ENCODE measurements at regions of chr3 and their contacts with region 1.

Region 1: GRCh38 chr3:116896116-116896515 is 186.5 kb downstream of the TUSC7 start:
- DNase-seq: no peak
- ATAC-seq: no peak
- H3K4me3 ChIP-seq: no peak overlapping the region
- H3K4me3 Mint-ChIP-seq: no peak overlapping the region
- H3K27ac ChIP-seq: no peak overlapping the region
- H3K27ac Mint-ChIP-seq: no peak overlapping the region
- H3K4me1 ChIP-seq: no peaks in the 10 kb centered on the region
- H3K4me1 Mint-ChIP-seq: no peaks in the 10 kb centered on the region
- H3K27me3 ChIP-seq: no peaks in the 10 kb centered on the region
- H3K27me3 Mint-ChIP-seq: no peaks in the 10 kb centered on the region

Region 2: GRCh38 chr3:116872688-116873087 is 23.4 kb before region 1 on chr3:
- CTCF ChIA-PET with region 1: no interaction called
- POLR2A ChIA-PET with region 1: no interaction called
- DNase-seq: no peak
- ATAC-seq: no peak
- H3K4me3 ChIP-seq: no peak overlapping the region
- H3K4me3 Mint-ChIP-seq: no peak overlapping the region
- H3K27ac ChIP-seq: no peak overlapping the region
- H3K27ac Mint-ChIP-seq: no peak overlapping the region
- H3K4me1 ChIP-seq: no peaks in the 10 kb centered on the region
- H3K4me1 Mint-ChIP-seq: no peaks in the 10 kb centered on the region
- H3K27me3 ChIP-seq: no peaks in the 10 kb centered on the region
- H3K27me3 Mint-ChIP-seq: no peaks in the 10 kb centered on the region

Region 3: DNA sequence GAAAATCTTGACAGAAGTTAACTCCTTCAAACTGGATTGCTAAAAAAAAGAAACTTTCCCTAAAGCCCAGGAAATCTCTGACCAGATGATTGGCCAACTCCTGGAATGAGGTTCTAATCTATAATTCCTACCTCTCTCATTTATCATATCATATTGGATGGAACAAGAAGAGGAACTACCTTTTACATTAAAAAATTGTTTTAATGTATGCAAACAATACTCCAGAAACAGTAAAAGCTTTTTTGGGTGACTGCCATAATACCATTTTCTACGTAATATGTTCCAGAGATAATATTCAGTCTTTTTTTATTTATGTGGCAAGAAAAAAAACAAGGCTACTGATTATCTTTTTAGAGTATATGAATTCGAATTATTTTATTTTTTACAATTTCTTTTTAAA is 17.9 kb after region 1 on chr3:
- CTCF ChIA-PET with region 1: interaction called in 1 of 2 experiments, 15 read pairs
- POLR2A ChIA-PET with region 1: no interaction called
- DNase-seq: no peak
- ATAC-seq: no peak
- H3K4me3 ChIP-seq: no peak overlapping the region
- H3K4me3 Mint-ChIP-seq: no peak overlapping the region
- H3K27ac ChIP-seq: no peak overlapping the region
- H3K27ac Mint-ChIP-seq: no peak overlapping the region
- H3K4me1 ChIP-seq: no peaks in the 10 kb centered on the region
- H3K4me1 Mint-ChIP-seq: no peaks in the 10 kb centered on the region
- H3K27me3 ChIP-seq: no peaks in the 10 kb centered on the region
- H3K27me3 Mint-ChIP-seq: no peaks in the 10 kb centered on the region

Measured in T-cell (primary cell).